ENCODE measurements at regions of chr20 and their contacts with region 1.

Region 1: DNA sequence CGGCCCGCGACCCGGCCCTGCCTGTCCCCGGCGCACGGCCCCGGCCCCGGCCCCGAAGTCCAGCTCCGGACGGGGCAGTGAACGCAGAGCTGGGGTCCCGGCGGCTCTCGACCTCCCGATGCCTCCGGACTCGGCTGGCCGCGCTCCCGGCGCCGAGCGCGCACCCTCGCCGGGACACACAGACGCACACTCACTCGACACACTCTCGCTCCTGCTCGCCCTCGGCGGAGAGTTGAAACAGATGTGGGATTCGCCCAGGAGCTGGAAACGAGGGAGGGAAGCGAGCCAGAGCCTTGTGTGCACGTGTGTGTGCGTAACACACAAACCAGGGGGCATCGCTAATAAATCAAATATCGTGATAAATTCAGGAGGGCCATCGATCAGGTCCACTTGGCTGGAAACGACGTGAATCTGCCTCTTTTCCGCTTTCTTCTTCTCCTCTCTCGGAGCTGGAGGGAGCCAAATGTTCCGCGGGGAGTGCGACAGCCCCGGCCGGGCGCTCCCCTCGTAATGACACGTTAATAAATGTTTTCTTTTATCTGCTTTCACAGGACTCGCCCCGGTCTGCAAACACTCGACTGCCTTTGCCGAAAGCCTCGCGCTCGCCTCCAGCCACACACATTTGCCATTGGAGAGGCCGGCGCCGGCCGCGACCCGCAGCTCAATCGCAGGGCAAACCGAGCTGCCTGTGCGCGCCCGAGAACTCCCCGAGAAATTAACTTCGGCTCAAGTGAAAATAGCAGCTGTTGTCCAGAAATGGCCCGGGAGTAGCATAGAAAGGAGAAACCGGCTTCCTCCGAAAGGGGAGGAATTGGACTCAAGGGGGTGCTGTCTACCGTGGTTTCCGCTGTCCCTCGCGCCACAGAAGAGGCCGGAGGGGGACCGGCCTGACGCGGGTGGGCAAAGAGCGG is 828 bp upstream of the SULF2 start:
- DNase-seq: peak; percentile 79
- H3K4me3 ChIP-seq: peak overlapping the region; percentile 56 to 62 (median 56)
- H3K27ac ChIP-seq: peak overlapping the region; percentile 57
- H3K4me1 ChIP-seq: peaks cover 44% of the 10 kb centered on the region
- H3K27me3 ChIP-seq: no peaks in the 10 kb centered on the region
- CTCF ChIP-seq: peak; percentile 56 to 80

Region 2: GRCh38 chr20:47663333-47664067 is 122.6 kb before region 1 on chr20:
- CTCF ChIA-PET with region 1: interaction called, 4 read pairs
- dilution Hi-C with region 1: no loop called
- in situ Hi-C with region 1: no loop called
- intact Hi-C with region 1: loop called (anchors 5 kb)
- DNase-seq: peak; percentile 67
- H3K4me3 ChIP-seq: no peak overlapping the region
- H3K27ac ChIP-seq: no peak overlapping the region
- H3K4me1 ChIP-seq: peaks cover 24% of the 10 kb centered on the region
- H3K27me3 ChIP-seq: no peaks in the 10 kb centered on the region
- CTCF ChIP-seq: peak; percentile 92 to 95

Region 3: DNA sequence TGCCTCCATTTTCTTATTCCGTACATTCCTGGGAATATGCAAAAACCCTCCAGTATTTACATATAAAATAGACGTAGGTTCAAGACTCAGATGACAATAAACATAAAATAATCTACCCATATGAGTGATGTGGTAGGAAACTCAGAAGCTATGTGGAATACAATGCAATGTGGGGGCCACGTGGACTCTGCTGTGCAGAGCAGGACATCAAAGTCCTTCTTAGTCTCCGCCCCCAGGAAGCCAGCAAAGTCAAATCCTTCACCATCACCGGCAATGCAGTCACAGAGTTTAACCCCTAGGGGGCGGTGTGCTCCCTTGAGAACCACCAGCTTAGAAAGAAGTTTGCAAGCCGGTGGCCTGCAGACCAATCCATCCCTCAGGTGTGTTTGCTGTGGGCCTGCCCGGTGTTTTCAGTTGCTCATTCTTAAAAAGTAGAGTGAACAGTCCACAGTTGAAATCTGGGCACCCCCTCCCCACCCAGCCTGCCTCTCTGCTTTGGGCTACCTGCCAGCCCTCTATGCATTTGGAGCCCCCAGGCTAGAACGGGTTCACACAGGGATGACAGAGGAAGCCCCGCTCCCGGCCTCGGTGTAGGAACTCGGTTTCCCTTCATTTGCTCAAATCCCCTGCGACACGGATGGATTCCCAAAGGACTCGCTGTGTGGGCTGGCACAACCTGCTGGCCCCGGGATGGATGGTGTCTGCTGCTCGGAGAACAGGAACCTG is 60.7 kb before region 1 on chr20:
- CTCF ChIA-PET with region 1: interaction called, 3 read pairs
- dilution Hi-C with region 1: no loop called
- in situ Hi-C with region 1: no loop called
- intact Hi-C with region 1: loop called (anchors 1 kb)
- DNase-seq: peak; percentile 76
- H3K4me3 ChIP-seq: no peak overlapping the region
- H3K27ac ChIP-seq: no peak overlapping the region
- H3K4me1 ChIP-seq: no peaks in the 10 kb centered on the region
- H3K27me3 ChIP-seq: no peaks in the 10 kb centered on the region
- CTCF ChIP-seq: peak; percentile 92 to 95

Region 4: DNA sequence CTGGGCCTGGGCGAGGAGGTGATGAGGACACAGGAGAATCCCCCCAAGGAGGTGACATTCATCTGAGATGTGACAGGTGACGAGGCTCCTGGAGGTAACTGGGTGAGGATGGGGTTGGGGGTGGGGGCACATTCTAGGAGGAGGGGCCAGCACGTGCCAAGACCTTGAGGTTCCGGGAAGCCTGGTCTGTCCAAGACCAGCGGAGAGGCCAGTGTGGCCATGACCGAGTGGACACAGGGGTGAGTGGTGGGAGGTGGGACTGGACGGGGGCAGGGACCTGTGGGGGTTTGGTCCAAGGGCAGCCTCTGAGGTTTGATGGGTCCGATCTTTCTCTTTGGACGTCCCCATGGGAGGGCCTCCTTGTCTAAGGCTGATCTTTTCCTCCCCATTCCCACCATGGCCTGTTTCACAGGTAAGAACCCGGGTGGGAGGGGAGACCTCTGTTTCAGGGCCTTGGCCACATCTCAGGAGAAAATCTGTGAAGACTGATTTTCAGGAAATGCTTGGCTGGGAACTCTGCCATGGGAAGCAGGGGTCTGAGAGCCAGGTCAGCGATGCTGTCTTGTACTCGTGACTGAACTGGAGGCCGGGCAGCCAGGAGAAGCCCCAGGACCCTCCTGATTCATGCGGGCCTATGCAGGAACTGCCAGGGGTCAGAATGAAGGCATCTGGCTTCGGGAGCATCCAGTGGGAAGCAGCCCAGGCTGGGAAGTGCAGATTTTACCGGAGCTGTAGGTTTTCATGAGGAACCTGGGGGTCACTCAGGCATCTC is 89.0 kb after region 1 on chr20:
- CTCF ChIA-PET with region 1: no interaction called
- dilution Hi-C with region 1: loop called (anchors 5 kb)
- in situ Hi-C with region 1: no loop called
- intact Hi-C with region 1: no loop called
- DNase-seq: no peak
- H3K4me3 ChIP-seq: no peak overlapping the region
- H3K27ac ChIP-seq: no peak overlapping the region
- H3K4me1 ChIP-seq: no peaks in the 10 kb centered on the region
- H3K27me3 ChIP-seq: no peaks in the 10 kb centered on the region
- CTCF ChIP-seq: no peak

Region 5: DNA sequence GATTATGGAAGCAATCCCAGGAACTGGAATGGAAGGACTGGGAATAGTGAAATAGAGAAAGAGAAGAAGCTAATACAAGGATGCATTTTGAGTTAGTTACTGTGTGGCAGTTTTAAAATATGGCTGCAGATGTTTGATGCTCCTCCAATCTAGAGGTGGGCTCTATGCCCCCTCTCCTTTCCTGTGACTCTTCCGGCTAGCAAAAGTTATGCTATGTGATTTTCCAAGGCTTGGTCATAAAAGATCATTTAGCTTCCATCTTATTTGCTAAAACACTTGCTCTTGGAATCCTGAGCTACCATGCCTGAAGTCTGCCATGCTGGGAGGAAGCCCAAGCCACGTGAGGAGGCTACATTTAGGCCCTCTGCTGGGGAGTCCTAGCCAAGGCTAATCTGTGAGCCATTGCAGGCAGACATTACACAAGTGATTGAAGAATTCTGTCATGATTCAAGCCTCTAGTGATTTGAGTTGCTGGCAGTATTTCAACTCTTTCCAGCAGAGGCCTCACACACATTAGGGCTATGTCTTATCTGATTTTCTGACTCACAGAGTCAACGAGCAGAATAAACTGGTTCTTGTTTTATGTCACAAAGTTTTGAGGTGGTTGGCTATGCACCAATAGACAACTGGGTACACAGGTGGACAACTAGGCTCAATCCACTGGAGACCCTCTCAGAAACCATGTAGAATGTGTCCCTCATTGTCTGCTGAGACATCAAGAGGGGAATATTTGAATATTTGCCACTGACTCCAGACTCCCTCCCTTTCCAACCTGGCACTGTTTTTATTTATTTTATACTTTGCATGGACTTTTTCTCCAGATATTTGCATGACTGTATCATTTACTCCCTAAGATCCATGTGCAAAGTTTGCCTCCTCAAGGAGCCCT is 226.3 kb after region 1 on chr20:
- CTCF ChIA-PET with region 1: no interaction called
- dilution Hi-C with region 1: no loop called
- in situ Hi-C with region 1: loop called in 1 of 2 experiments (anchors 10 kb)
- intact Hi-C with region 1: loop called (anchors 5 kb)
- DNase-seq: peak; percentile 89
- H3K4me3 ChIP-seq: no peak overlapping the region
- H3K27ac ChIP-seq: no peak overlapping the region
- H3K4me1 ChIP-seq: no peaks in the 10 kb centered on the region
- H3K27me3 ChIP-seq: no peaks in the 10 kb centered on the region
- CTCF ChIP-seq: peak; percentile 26 to 68

Region 6: GRCh38 chr20:48198929-48199451 is 412.9 kb after region 1 on chr20:
- CTCF ChIA-PET with region 1: no interaction called
- dilution Hi-C with region 1: no loop called
- in situ Hi-C with region 1: loop called in 1 of 2 experiments (anchors 10 kb)
- intact Hi-C with region 1: no loop called
- DNase-seq: no peak
- H3K4me3 ChIP-seq: no peak overlapping the region
- H3K27ac ChIP-seq: no peak overlapping the region
- H3K4me1 ChIP-seq: no peaks in the 10 kb centered on the region
- H3K27me3 ChIP-seq: no peaks in the 10 kb centered on the region
- CTCF ChIP-seq: no peak

Measured in mammary epithelial cell (primary cell).